ENCODE measurements at regions of chr3 and their contacts with region 1.

Region 1: DNA sequence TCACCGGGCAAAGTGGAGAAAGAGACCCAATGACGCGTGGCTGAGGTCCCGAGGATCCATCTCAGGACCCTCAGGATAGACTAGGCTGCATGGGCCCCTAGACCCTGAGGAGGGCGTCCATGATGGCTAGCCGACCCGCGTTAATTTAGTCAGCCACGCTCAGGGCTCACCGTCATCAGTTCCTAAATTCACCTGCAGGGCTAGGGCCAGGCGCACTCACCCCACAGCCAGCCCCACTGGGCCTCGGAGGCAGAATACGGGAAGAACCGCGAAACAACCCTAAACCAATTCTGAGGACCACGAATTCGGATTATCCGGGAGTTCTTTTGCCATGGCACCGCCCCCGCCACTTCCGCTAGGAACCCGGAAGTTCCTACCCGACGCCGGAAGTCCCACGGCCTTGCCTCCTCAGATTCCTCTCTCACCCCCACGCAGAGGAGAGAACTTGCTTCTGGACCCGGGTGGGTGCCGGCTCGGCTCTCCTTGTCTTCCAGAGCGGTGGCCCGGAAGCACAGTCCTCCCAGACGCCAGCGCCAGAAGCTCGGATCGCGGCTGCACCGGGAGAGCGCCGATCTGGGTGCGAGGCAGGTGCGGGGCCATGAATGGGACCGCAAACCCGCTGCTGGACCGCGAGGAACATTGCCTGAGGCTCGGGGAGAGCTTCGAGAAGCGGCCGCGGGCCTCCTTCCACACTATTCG is at the starts of genes EAF1 and METTL6:
- DNase-seq: peak; percentile 92
- ATAC-seq: peak; percentile 83
- H3K4me3 Mint-ChIP-seq: peak within 1 kb of the TSS; percentile 90
- H3K27ac Mint-ChIP-seq: peak within 1 kb of the TSS; percentile 97
- H3K4me1 Mint-ChIP-seq: peaks cover 45% of the 10 kb centered on the region
- H3K27me3 Mint-ChIP-seq: no peaks in the 10 kb centered on the region
- total RNA-seq, gene EAF1: 21.2 to 25.6 TPM
- total RNA-seq, gene METTL6: 13.0 to 19.5 TPM

Region 2: DNA sequence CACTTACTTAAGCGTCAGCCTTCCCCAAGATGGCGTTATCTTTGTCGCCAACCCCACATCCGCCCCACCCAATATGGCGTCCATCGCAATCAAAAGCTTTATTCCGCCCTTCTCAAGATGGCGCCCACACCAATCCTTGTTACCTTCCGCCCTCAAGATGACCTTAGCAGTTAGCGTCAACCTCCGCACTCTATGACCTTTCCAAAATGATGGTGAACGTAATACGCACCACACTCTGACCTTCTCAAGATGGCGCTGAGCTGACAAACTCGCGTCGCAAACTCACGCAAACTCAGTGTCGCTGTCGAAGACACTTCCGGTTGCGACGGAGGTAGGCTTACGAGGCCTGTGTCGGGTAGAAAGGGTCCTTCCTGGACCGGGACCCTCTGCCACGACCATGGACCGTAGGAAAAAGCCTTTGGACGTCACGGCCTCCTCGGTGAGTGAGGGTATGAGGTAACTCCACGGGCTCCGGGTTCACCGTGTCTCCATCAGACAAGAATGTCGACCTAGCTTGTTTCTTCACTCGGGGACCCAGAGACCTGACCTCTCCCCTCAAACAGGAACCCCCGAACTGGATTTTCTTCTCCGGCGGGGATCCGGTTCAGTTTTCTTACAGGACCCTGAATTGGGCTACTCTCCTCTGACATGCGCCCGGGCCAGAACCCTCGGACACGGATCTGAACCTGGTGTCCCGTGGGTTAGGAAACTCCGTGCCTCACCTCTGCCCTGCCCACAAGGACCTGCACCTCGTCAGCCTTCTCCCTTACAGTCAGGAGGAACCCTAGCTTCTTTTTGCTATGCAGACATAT is 775.7 kb before region 1 on chr3 and contains the start of gene CCDC174:
- CTCF ChIA-PET with region 1: no interaction called
- POLR2A ChIA-PET with region 1: no interaction called
- intact Hi-C with region 1: loop called in 1 of 2 experiments (anchors 1 kb)
- DNase-seq: peak; percentile 95
- ATAC-seq: peak; percentile 99
- H3K4me3 Mint-ChIP-seq: peak within 1 kb of the TSS; percentile 93
- H3K27ac Mint-ChIP-seq: peak within 1 kb of the TSS; percentile 96
- H3K4me1 Mint-ChIP-seq: peaks cover 40% of the 10 kb centered on the region
- H3K27me3 Mint-ChIP-seq: no peaks in the 10 kb centered on the region
- total RNA-seq, gene CCDC174: 16.2 to 18.2 TPM

Region 3: DNA sequence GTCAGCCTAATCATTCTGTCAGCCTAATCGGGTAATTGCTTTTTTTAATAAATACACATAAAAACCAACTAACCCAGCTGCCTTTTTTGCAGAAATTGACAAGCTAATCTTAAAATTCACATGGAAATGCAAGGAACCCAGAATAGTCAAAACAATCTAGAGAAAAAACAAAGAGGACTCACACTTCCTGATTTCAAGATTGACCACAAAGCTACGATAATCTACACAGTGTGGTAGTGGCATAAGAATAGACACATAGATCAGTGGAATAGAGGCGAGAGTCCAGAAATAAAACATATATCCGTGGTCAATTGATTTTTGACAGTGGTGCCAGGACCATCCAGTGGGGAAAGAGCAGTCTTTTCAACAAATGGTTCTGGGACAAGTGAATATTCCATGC is 754.7 kb before region 1 on chr3:
- CTCF ChIA-PET with region 1: no interaction called
- POLR2A ChIA-PET with region 1: no interaction called
- intact Hi-C with region 1: no loop called
- DNase-seq: no peak
- ATAC-seq: no peak
- H3K4me3 Mint-ChIP-seq: no peak overlapping the region
- H3K27ac Mint-ChIP-seq: no peak overlapping the region
- H3K4me1 Mint-ChIP-seq: no peaks in the 10 kb centered on the region
- H3K27me3 Mint-ChIP-seq: no peaks in the 10 kb centered on the region

Region 4: DNA sequence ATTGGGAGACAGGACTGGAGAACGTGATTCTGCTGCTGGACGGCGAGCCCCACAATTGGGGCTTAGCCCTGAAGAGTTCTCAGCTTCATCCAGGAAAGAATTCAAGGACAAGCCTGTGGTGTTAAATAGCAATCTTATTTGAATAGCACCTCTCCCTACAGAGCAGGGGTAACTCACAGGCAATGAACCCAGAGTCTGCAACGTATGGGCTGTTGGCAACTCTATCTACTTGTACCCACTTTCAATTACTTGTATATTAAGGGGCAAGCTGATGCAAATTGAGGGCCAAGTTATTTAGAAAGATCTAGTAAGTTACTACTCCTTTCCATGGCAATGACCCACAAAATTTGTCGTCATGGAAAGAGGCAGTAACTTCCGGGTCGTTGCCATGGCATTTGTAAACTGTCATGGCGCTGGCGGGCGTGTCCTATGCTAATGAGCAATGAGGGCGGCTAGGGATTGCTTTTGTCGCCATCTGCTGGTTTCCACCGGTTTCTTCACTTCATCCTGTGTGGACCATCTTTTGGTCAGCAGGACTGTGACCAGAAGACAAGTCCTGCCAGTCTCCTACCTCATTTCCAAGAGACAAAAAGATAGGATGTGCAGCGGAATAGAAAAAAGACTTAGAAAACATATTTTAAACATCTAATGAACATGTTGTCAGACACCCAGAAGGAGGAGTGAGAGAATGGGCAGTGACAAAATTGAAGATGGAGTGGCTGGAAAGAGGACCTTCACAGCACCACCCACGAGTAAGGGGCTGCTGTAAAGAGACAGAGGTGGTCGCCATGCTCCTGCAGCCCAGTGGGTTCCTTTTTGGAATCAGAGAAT is 49.2 kb before region 1 on chr3:
- CTCF ChIA-PET with region 1: no interaction called
- POLR2A ChIA-PET with region 1: no interaction called
- intact Hi-C with region 1: loop called in 1 of 2 experiments (anchors 1 kb)
- DNase-seq: peak; percentile 96
- ATAC-seq: peak; percentile 96
- H3K4me3 Mint-ChIP-seq: no peak overlapping the region
- H3K27ac Mint-ChIP-seq: peak overlapping the region; percentile 73
- H3K4me1 Mint-ChIP-seq: peaks cover 6% of the 10 kb centered on the region
- H3K27me3 Mint-ChIP-seq: no peaks in the 10 kb centered on the region

Region 5: DNA sequence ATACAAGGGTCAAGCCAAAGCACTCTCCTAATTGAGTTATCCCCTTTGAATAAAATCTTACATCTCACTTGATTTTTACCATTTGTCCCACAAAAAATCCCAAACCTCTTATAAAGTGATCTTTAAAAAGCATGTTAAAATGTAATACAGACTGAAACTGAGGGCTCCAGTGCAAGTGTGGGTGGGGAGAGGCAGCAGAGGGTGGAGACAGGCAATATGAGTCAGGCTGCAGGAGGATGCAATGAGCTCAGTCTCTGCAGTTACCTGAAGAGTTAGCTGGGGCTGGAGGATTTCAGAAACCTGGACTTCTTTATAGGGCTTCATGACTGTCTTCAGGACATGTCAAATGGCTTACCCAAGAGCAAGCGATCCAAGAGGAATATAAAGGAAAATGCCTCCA is 108.4 kb after region 1 on chr3:
- CTCF ChIA-PET with region 1: no interaction called
- POLR2A ChIA-PET with region 1: no interaction called
- intact Hi-C with region 1: loop called in 1 of 2 experiments (anchors 5 kb)
- DNase-seq: peak; percentile 76
- ATAC-seq: peak; percentile 99
- H3K4me3 Mint-ChIP-seq: no peak overlapping the region
- H3K27ac Mint-ChIP-seq: peak overlapping the region; percentile 45
- H3K4me1 Mint-ChIP-seq: peaks cover 39% of the 10 kb centered on the region
- H3K27me3 Mint-ChIP-seq: no peaks in the 10 kb centered on the region

Region 6: DNA sequence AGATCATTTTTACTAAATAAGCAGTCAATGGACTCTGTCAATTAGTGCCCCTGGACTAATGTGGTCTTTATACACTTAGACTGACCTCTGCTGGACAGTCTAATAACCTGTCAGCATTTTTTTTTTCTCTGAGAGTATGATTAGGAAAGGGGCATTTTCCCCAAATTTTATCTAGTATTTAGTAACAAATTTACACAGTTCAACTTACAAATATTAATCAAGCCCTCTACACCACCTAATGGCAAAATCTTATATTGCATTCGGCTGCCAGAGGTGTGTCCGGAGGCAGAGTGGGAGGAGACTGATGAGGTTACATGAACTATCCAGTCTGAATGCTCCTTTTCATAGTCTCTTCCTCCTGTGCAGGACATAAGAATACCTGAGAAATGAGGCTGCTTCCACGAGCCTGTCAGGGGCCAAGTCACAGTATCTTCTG is 130.2 kb after region 1 on chr3:
- CTCF ChIA-PET with region 1: interaction called, 3 read pairs
- POLR2A ChIA-PET with region 1: no interaction called
- intact Hi-C with region 1: loop called (anchors 1 to 5 kb)
- DNase-seq: peak; percentile 75
- ATAC-seq: peak; percentile 87
- H3K4me3 Mint-ChIP-seq: no peak overlapping the region
- H3K27ac Mint-ChIP-seq: no peak overlapping the region
- H3K4me1 Mint-ChIP-seq: peaks cover 10% of the 10 kb centered on the region
- H3K27me3 Mint-ChIP-seq: no peaks in the 10 kb centered on the region

Region 7: DNA sequence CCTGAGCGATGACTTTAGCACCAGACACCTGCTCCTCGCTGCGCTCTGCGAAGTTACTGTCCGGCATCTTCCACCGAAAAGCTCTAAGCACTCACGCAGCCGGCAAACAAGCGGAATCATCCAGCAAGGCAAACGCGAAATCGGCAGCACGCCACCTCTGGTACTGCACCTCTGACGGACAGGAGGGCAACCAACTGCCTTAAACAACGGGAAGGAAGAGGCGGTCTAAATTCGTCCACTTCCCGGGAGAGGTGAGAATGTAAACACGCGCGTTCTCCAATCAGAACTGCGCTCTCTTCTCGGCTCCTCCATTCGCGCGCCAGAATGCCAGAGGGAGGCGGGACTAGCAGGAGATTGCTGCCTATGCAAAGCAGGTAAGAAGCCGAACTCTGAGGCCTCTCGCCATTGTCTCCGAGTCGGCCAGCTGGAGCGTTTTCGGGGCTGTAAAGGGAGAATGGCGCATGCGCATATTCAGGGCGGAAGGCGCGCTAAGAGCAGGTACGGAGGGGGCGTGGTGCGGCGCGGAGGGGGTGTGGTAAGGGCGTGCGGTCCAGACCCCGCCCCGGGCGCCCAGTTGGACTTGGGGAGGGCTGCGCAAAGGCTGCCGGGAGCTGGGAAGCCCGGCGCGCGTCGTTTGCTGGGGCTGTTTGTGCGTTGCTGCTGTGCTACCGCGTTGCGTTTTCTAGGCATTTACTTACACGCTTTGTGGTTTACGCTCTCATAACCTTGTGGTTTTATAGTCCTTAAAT is 174.2 kb after region 1 on chr3 and contains the starts of genes BTD and HACL1:
- CTCF ChIA-PET with region 1: no interaction called
- POLR2A ChIA-PET with region 1: no interaction called
- intact Hi-C with region 1: loop called (anchors 1 to 2 kb)
- DNase-seq: peak; percentile 99
- ATAC-seq: peak; percentile 94
- H3K4me3 Mint-ChIP-seq: peak within 1 kb of the TSS; percentile 100
- H3K27ac Mint-ChIP-seq: peak within 1 kb of the TSS; percentile 98
- H3K4me1 Mint-ChIP-seq: peaks cover 41% of the 10 kb centered on the region
- H3K27me3 Mint-ChIP-seq: no peaks in the 10 kb centered on the region
- total RNA-seq, gene BTD: 3.8 to 4.4 TPM
- total RNA-seq, gene HACL1: 22.3 to 23.2 TPM

Region 8: DNA sequence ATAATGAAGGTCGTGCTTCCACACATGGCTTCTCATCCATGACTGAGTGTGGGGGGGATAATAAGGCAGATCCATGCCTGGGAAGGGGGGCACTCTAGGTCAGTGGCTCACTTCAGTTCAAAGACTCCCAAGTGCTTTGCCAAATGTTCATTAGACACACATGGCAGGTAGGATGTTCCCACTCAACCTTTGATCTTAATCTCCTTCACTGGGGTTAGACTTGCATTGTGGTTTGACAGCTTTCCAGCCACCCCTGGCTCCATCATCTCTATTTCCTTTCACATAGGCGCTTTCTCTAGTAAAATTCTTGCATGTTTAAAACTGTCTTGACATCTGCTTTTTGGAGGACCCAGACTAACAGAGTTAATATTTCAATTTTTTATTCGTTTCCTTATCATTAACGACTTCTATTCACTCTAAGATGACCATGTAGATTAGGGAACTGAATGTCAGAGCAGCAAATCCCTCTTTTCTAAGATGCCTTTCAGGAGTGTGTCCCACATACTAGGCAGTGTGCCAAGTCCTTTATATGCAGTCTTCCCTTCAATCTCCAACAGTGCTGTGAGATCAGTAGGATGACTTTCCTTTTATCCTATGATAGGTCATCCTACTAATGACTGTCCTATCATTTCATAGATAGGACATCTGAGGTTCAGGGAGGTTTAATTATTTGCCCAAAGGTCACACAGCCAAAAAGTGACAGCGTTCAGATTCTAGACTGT is 232.1 kb after region 1 on chr3:
- CTCF ChIA-PET with region 1: no interaction called
- POLR2A ChIA-PET with region 1: no interaction called
- intact Hi-C with region 1: no loop called
- DNase-seq: no peak
- ATAC-seq: no peak
- H3K4me3 Mint-ChIP-seq: no peak overlapping the region
- H3K27ac Mint-ChIP-seq: no peak overlapping the region
- H3K4me1 Mint-ChIP-seq: peaks cover 9% of the 10 kb centered on the region
- H3K27me3 Mint-ChIP-seq: no peaks in the 10 kb centered on the region

Measured in activated CD4-positive, alpha-beta T cell treated with anti-CD3 and anti-CD28 coated beads for 36 hours (primary cell).